ENCODE measurements at regions of chr5 and their contacts with region 1.

Region 1: GRCh38 chr5:115785381-115786065 is 30.9 kb downstream of the CDO1 start:
- DNase-seq: peak; percentile 15 to 59
- H3K4me3 ChIP-seq: no peak overlapping the region
- H3K27ac ChIP-seq: no peak overlapping the region
- H3K4me1 ChIP-seq: no peaks in the 10 kb centered on the region; a peak in 2 of 7 replicates
- H3K27me3 ChIP-seq: no peaks in the 10 kb centered on the region
- CTCF ChIP-seq: no peak
- EP300 ChIP-seq: no peak
- POLR2A ChIP-seq: no peak
- RAD21 ChIP-seq: no peak

Region 2: GRCh38 chr5:115770466-115770865 is 15.1 kb before region 1 on chr5:
- CTCF ChIA-PET with region 1: interaction called, 78 read pairs
- POLR2A ChIA-PET with region 1: no interaction called
- DNase-seq: peak; percentile 27 to 71
- H3K4me3 ChIP-seq: no peak overlapping the region
- H3K27ac ChIP-seq: no peak overlapping the region
- H3K4me1 ChIP-seq: no peaks in the 10 kb centered on the region
- H3K27me3 ChIP-seq: peaks cover 0 to 1% (median 0%) of the 10 kb centered on the region in 4 experiments; a peak in 1 of 7 replicates
- CTCF ChIP-seq: peak; percentile 69 to 90 (median 82)
- EP300 ChIP-seq: no peak
- POLR2A ChIP-seq: no peak
- RAD21 ChIP-seq: peak; percentile 71 to 82

Measured in H1 (cell line).